ENCODE measurements at regions of chr14 and their contacts with region 1.

Region 1: GRCh38 chr14:24013654-24014514 is 25.2 kb downstream of the DHRS4L2 start:
- DNase-seq: peak; percentile 42
- H3K4me3 ChIP-seq: no peak overlapping the region
- H3K27ac ChIP-seq: no peak overlapping the region
- H3K4me1 ChIP-seq: peaks cover 0 to 17% (median 6%) of the 10 kb centered on the region in 4 donors
- H3K27me3 ChIP-seq: no peaks in the 10 kb centered on the region
- CTCF ChIP-seq: peak; percentile 90 to 97 (median 94)
- EP300 ChIP-seq: no peak
- POLR2A ChIP-seq: no peak

Region 2: DNA sequence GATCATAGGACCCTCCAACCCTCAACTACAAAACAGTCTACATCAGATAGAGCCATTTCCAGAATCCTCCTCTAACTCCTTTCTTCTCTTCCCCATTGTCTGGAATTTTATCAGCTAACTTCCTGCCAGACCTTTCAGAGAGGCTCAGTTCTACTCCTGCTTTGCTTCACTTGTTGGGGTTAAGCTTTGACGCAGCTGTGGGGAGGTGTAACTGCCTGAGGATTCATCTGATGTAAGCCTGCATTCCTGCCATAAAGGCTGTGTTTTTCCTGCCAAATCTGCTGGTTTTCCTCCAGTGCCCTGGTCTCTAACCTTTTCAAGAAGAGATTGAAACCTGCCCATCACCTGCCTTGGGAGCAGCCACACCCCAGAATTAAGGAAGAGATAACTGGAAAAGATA is 360.8 kb before region 1 on chr14:
- in situ Hi-C with region 1: no loop called
- intact Hi-C with region 1: no loop called
- DNase-seq: no peak
- H3K4me3 ChIP-seq: no peak overlapping the region
- H3K27ac ChIP-seq: no peak overlapping the region
- H3K4me1 ChIP-seq: no peaks in the 10 kb centered on the region
- H3K27me3 ChIP-seq: no peaks in the 10 kb centered on the region
- CTCF ChIP-seq: no peak
- EP300 ChIP-seq: no peak
- POLR2A ChIP-seq: no peak

Region 3: DNA sequence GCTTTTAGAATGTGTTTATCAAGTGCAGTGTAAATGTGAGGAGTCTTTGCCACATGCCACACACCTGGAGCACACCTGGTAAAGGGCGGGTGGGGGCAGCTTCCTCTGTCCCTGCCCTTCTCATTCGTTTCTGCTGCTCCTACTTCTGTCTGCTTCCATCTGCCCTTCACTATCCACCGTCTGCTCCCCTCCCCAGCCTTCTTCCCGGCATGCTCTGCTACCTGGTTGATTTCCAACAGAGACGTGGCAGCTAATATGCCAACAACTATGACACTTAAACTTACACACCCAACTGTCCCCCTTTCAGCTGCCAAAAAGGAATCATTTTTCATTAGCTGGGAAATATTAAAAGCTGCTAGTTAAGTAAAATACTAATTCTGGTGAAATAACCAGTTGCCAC is 28.9 kb after region 1 on chr14:
- in situ Hi-C with region 1: no loop called
- intact Hi-C with region 1: loop called (anchors 2 kb)
- DNase-seq: no peak
- H3K4me3 ChIP-seq: no peak overlapping the region
- H3K27ac ChIP-seq: no peak overlapping the region
- H3K4me1 ChIP-seq: no peaks in the 10 kb centered on the region
- H3K27me3 ChIP-seq: no peaks in the 10 kb centered on the region
- CTCF ChIP-seq: no peak
- EP300 ChIP-seq: no peak
- POLR2A ChIP-seq: no peak

Region 4: DNA sequence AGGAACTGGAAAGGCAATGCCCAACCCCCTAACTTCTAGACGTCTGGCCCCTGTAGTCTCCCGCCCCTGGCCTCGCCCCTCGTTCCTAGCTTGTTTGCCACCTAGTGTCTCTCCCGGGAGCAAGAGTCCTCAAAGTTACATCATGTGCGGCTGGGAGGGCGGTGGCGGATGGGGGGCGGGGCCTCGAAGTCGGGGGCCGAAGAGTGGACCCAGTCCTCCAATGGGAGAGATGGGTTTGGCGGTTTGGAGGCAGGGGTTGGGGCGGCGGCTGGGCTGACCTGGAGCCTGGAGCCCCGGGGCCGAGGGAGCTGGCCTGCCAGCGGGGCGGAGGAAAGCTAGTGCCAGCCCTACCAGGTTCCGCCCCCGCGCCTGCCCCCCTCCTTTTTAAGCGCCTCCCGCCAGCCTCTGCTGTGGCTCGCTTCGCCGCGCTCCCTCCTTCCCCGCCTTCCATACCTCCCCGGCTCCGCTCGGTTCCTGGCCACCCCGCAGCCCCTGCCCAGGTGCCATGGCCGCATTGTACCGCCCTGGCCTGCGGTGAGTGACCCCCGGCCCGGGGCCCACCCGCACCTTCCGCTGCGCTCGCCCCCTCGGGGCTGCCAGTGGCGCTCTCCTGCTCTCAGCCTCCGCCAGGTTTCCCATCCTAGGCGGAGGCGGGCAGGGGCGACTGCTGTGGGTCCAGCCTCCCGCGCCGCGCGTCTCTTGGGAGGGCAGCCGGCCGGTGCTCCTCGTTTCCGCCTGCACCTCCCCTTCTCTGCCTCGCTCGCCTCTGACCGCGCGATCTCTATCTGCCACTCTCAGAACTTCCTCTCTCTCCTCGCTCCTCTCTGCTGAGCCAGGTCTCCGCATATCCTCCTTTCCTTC is 80.2 kb after region 1 on chr14 and contains the start of gene PCK2:
- in situ Hi-C with region 1: no loop called
- intact Hi-C with region 1: loop called (anchors 10 kb)
- DNase-seq: peak; percentile 96
- H3K4me3 ChIP-seq: peak within 1 kb of the TSS; percentile 65 to 92 (median 82)
- H3K27ac ChIP-seq: peak within 1 kb of the TSS; percentile 92 to 99 (median 97)
- H3K4me1 ChIP-seq: peaks cover 4 to 42% (median 19%) of the 10 kb centered on the region in 4 donors
- H3K27me3 ChIP-seq: no peaks in the 10 kb centered on the region
- CTCF ChIP-seq: peak in 3 of 5 experiments; percentile 25 to 45 (median 31)
- EP300 ChIP-seq: no peak
- POLR2A ChIP-seq: peak; percentile 98
- total RNA-seq, gene PCK2: 74.4 to 238 (median 130) TPM

Measured in transverse colon (tissue), 4 donors.